Gastrocnemius medialis (tissue), 4 donors: ENCODE measurements at regions of chr18 and their contacts with region 1.

Region 1: GRCh38 chr18:24231773-24232735 is 93.2 kb downstream of the CABYR start:
- DNase-seq: peak; percentile 50 to 52
- ATAC-seq: peak; percentile 89 to 95
- H3K4me3 ChIP-seq: peak overlapping the region; percentile 1 to 40 (median 8)
- H3K27ac ChIP-seq: peak overlapping the region; percentile 75 to 83 (median 78)
- H3K4me1 ChIP-seq: peaks cover 43 to 64% of the 10 kb centered on the region in 2 donors
- H3K27me3 ChIP-seq: no peaks in the 10 kb centered on the region
- CTCF ChIP-seq: no peak
- POLR2A ChIP-seq: no peak

Region 2: GRCh38 chr18:24176727-24177416 is 55.2 kb before region 1 on chr18:
- in situ Hi-C with region 1: loop called in 1 of 4 experiments (anchors 10 kb)
- intact Hi-C with region 1: no loop called
- DNase-seq: peak; percentile 40 to 53
- ATAC-seq: peak; percentile 77 to 78
- H3K4me3 ChIP-seq: no peak overlapping the region
- H3K27ac ChIP-seq: peak overlapping the region in 2 of 4 donors; percentile 1 to 22
- H3K4me1 ChIP-seq: peaks cover 6 to 7% of the 10 kb centered on the region in 2 donors
- H3K27me3 ChIP-seq: no peaks in the 10 kb centered on the region
- CTCF ChIP-seq: peak; percentile 71 to 85 (median 78)
- POLR2A ChIP-seq: no peak

Region 3: GRCh38 chr18:24198461-24198860 is 33.6 kb before region 1 on chr18:
- in situ Hi-C with region 1: no loop called
- intact Hi-C with region 1: loop called (anchors 5 kb)
- DNase-seq: peak; percentile 95 to 96
- ATAC-seq: peak; percentile 84 to 88
- H3K4me3 ChIP-seq: peak overlapping the region in 1 of 4 donors; percentile 7
- H3K27ac ChIP-seq: peak overlapping the region; percentile 80 to 97 (median 92)
- H3K4me1 ChIP-seq: peaks cover 73 to 83% of the 10 kb centered on the region in 2 donors
- H3K27me3 ChIP-seq: no peaks in the 10 kb centered on the region
- CTCF ChIP-seq: no peak
- POLR2A ChIP-seq: peak in 1 of 2 donors; percentile 20

Region 4: GRCh38 chr18:24271381-24272331 is 39.6 kb after region 1 on chr18:
- in situ Hi-C with region 1: loop called in 1 of 4 experiments (anchors 5 kb)
- intact Hi-C with region 1: loop called (anchors 2 kb)
- DNase-seq: peak; percentile 64 to 77
- ATAC-seq: peak; percentile 76 to 81
- H3K4me3 ChIP-seq: peak overlapping the region; percentile 81 to 94 (median 86)
- H3K27ac ChIP-seq: peak overlapping the region; percentile 88 to 94 (median 91)
- H3K4me1 ChIP-seq: peaks cover 13 to 54% of the 10 kb centered on the region in 2 donors
- H3K27me3 ChIP-seq: no peaks in the 10 kb centered on the region
- CTCF ChIP-seq: peak in 2 of 5 experiments; percentile 41 to 49
- POLR2A ChIP-seq: peak; percentile 25 to 44